MCF 10A (cell line): ENCODE measurements at regions of chr22 and their contacts with region 1.

Region 1: GRCh38 chr22:38996105-38996504 is 14.0 kb downstream of the APOBEC3B start:
- DNase-seq: no peak
- H3K4me3 Mint-ChIP-seq: no peak overlapping the region
- H3K27ac Mint-ChIP-seq: no peak overlapping the region
- H3K4me1 Mint-ChIP-seq: no peaks in the 10 kb centered on the region
- H3K27me3 Mint-ChIP-seq: peaks cover 54% of the 10 kb centered on the region
- CTCF ChIP-seq: no peak

Region 2: DNA sequence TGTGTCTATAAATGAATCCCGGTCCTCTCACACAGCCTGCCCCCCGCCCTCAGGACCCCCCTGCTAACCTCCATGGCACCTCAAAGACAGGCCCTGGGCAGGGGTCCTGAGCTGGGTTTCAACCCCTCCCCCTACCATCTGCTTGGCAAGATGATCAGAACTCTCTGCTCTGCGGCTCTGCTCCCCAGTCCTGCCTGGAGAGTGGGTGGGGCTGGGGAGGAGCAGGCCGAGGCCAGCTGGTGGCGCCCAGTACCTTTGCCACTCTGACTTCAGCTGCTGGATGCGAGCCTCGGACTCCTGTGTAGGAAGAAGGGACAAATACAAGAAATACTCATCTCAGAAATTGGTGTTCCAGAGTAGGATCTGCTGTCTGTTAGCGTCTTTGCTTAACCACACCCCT is 255.4 kb before region 1 on chr22:
- CTCF ChIA-PET with region 1: no interaction called
- POLR2A ChIA-PET with region 1: no interaction called
- intact Hi-C with region 1: no loop called
- DNase-seq: no peak
- H3K4me3 Mint-ChIP-seq: no peak overlapping the region
- H3K27ac Mint-ChIP-seq: no peak overlapping the region
- H3K4me1 Mint-ChIP-seq: peaks cover 4% of the 10 kb centered on the region
- H3K27me3 Mint-ChIP-seq: no peaks in the 10 kb centered on the region
- CTCF ChIP-seq: no peak

Region 3: DNA sequence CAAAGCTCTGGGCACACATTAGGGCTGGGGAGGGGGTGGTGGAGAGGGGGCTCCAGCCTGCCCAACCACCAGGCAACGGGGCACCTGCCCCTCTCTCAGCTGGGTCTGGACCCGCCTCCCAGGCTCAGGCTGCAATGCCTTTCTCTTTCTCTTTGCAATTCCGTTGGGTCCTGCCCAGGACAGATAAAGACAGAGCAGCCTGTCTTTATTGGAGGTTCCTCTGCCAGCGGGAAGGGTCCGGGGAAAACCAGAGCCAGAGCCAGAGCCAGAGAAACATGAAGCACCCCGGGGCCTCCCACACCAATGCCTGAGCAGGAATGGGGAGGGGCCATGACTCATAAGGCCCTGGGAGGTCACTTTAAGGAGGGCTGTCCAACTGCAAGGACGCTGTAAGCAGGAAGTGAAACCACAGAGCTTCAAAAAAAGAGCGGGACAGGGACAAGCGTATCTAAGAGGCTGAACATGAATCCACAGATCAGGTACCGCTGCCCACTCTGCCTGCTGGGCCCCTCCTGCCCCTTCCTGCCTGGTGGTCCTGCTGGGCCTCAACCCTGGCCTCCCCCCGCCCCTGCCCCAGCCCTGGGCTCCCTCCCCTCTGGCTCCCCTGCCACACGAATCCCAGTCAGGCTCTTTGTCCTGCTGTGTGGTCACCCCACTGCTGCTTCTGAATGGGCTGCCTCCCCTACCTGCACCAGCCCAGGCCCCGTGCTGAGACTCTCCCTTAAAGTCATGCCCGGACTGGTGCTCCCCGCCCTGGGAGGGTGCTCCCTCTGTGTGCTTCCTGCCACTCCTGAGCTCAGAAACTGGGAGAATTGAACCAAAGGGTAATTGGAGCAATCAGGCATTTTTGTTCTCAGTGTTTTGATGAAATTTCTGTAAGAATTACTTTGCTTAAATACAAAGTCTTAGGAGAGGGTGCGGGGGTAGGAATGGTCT is 13.8 kb before region 1 on chr22 and contains the start of gene APOBEC3B:
- CTCF ChIA-PET with region 1: no interaction called
- POLR2A ChIA-PET with region 1: no interaction called
- intact Hi-C with region 1: loop called (anchors 1 kb)
- DNase-seq: peak; percentile 98
- H3K4me3 Mint-ChIP-seq: peak within 1 kb of the TSS; percentile 73
- H3K27ac Mint-ChIP-seq: peak within 1 kb of the TSS; percentile 70
- H3K4me1 Mint-ChIP-seq: peaks cover 15% of the 10 kb centered on the region
- H3K27me3 Mint-ChIP-seq: peaks cover 25% of the 10 kb centered on the region
- CTCF ChIP-seq: no peak
- total RNA-seq, gene APOBEC3B: 1.0 and 1.1 TPM in 2 replicates